ENCODE measurements at regions of chr10 and their contacts with region 1.

Region 1: DNA sequence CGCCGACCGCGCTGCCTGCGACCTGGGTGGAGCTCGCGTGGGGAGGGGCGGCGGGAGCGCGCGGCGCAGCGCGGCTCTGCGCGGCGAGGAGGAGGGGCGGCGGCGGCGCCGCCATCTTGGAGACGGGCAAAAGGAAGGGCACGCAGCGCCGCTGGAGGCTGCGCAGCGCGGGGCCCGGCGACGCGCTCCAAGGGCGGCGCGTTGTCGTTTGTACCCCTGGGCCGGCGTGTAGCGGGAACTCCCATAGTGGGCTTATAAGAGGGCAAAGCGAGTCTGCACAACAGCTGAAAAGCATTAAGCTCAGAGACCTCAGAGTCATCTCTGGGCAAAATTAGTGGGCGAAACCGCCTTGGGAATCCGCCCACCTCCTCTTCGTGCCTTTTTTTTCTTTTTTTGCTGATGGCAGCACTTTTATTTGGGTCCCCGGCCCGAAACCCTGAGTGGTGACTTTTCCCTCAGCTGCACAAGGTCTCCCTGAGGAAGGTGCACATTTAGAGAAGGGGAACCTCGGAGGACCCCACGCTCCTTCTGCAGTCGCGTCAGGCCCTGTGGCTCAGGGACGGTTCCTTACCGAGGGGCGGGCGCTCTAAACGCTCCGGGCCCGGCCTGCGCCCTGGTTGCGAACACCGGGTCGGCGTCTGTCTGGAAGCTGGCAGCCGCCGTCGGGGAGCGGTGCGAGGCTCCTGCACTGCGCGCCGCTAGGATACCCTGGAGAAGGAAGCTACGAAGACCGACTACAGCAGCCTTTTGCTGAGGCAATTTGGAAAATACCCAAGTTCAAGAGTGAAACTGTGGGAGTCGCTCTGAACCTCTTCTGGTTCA is 428 bp upstream of the MCMBP start:
- DNase-seq: peak; percentile 91
- ATAC-seq: peak; percentile 93
- H3K4me3 Mint-ChIP-seq: peak overlapping the region; percentile 82
- H3K27ac Mint-ChIP-seq: peak overlapping the region; percentile 86
- H3K4me1 Mint-ChIP-seq: peaks cover 35% of the 10 kb centered on the region
- H3K27me3 Mint-ChIP-seq: no peaks in the 10 kb centered on the region

Region 2: DNA sequence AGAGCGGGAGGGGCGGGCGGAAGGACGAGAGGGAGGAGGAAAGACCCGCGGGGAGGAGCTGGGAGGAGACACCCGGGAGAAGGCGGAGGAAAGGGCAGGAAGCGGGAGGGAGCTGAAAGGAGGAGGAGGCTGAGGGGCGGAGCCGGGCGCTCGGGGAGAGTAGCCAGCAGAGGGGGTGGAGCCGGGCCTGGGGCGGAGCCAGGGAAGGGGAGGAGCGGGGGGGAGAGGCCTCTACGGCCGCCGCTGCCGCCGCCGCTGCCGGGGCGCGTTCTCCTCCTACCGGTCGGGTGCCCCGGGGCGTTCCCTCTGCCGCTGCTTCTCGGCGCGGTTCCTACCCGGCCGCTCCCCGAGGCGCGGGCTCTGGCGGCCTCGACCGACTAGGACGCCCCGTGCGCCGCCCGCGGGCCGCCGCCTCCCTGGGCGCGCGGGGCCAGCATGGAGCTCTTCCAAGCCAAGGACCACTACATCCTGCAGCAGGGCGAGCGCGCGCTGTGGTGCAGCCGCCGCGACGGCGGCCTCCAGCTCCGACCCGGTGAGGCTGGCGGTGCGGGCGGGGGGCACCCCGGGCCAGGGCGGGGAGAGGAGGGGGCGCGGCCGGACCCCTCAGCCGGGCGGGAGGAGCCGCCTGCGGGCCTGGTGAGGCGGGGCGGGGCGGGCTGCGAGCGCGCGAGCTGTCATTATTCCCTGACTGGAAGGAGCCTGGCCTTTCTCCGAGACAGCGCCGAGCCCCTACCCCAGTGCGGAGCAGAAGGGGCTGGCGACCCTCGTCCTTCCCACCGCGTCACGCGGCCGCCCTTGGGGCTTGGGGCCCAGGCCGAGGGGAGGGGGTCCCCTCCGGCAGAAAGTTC is 147.0 kb before region 1 on chr10 and contains the start of gene INPP5F:
- CTCF ChIA-PET with region 1: interaction called, 4 read pairs
- POLR2A ChIA-PET with region 1: interaction called, 11 read pairs
- DNase-seq: peak; percentile 99
- ATAC-seq: peak; percentile 94
- H3K4me3 Mint-ChIP-seq: peak within 1 kb of the TSS; percentile 87
- H3K27ac Mint-ChIP-seq: peak within 1 kb of the TSS; percentile 81
- H3K4me1 Mint-ChIP-seq: peaks cover 46% of the 10 kb centered on the region
- H3K27me3 Mint-ChIP-seq: no peaks in the 10 kb centered on the region
- total RNA-seq, gene INPP5F: 15.9 to 17.6 TPM

Region 3: DNA sequence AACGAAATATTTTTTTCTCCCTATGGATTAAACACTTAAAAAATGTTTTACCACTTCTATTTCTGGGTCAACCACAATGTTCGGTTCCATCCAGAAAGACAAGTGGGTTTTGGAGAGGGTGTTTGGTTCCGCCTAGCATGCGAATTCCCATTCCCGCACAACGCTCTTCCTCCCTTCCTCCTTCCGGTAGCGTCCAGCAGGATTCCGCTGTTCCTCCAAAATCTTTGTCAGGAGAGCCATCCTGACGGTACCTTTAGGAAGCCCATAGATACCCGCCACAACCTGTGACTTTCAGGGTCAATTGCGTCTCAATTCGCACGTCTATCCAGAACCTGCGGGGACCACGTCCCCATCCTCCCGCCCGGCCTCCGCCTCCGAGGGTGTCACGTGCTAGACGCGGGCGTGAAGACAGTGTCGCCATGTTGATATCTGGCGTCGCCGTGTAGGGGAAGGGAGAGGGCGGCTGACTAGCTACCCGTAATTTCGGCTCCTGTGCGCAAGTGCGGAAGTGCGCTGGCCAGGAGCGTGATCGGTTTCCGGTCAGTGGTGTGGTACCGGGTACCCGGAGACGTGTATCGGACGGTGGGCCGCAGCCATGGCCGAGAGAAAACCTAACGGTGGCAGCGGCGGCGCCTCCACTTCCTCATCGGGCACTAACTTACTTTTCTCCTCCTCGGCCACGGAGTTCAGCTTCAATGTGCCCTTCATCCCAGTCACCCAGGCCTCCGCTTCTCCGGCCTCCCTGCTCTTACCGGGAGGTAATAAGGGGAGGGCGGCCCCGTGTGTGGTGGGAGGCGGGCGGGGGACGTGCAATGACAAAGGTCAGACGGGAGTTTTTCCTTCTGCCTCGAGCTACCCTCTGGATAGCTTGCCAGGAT is 19.4 kb after region 1 on chr10 and contains the start of gene SEC23IP:
- CTCF ChIA-PET with region 1: interaction called, 11 read pairs
- POLR2A ChIA-PET with region 1: interaction called, 54 read pairs
- DNase-seq: peak; percentile 95
- ATAC-seq: peak; percentile 100
- H3K4me3 Mint-ChIP-seq: peak within 1 kb of the TSS; percentile 94
- H3K27ac Mint-ChIP-seq: peak within 1 kb of the TSS; percentile 94
- H3K4me1 Mint-ChIP-seq: peaks cover 37% of the 10 kb centered on the region
- H3K27me3 Mint-ChIP-seq: no peaks in the 10 kb centered on the region
- total RNA-seq, gene SEC23IP: 53.8 to 58.9 TPM

Measured in activated CD8-positive, alpha-beta T cell treated with anti-CD3 and anti-CD28 coated beads, Interleukin-2, amount 10 ng/mL, durations not matched to agents 7 days and 5 days (primary cell).